H1 (cell line): ENCODE measurements at regions of chr6 and their contacts with region 1.

Region 1: GRCh38 chr6:165884813-165885765 is 222.0 kb upstream of the PDE10A start:
- DNase-seq: peak; percentile 47 to 94
- H3K4me3 ChIP-seq: no peak overlapping the region
- H3K27ac ChIP-seq: no peak overlapping the region
- H3K4me1 ChIP-seq: no peaks in the 10 kb centered on the region
- H3K27me3 ChIP-seq: peaks cover 0 to 2% (median 0%) of the 10 kb centered on the region in 4 experiments; a peak in 1 of 7 replicates
- CTCF ChIP-seq: peak; percentile 87 to 97 (median 87)
- EP300 ChIP-seq: no peak
- POLR2A ChIP-seq: no peak
- RAD21 ChIP-seq: peak; percentile 95 to 96

Region 2: GRCh38 chr6:165899611-165900010 is 14.5 kb after region 1 on chr6:
- CTCF ChIA-PET with region 1: interaction called, 14 read pairs
- POLR2A ChIA-PET with region 1: no interaction called
- DNase-seq: no peak
- H3K4me3 ChIP-seq: no peak overlapping the region
- H3K27ac ChIP-seq: no peak overlapping the region
- H3K4me1 ChIP-seq: no peaks in the 10 kb centered on the region
- H3K27me3 ChIP-seq: no peaks in the 10 kb centered on the region
- CTCF ChIP-seq: no peak
- EP300 ChIP-seq: no peak
- POLR2A ChIP-seq: no peak
- RAD21 ChIP-seq: no peak

Region 3: GRCh38 chr6:165931675-165932074 is 46.6 kb after region 1 on chr6:
- CTCF ChIA-PET with region 1: interaction called, 15 read pairs
- POLR2A ChIA-PET with region 1: no interaction called
- DNase-seq: no peak
- H3K4me3 ChIP-seq: no peak overlapping the region
- H3K27ac ChIP-seq: no peak overlapping the region
- H3K4me1 ChIP-seq: no peaks in the 10 kb centered on the region; a peak in 1 of 7 replicates
- H3K27me3 ChIP-seq: 0 out of 7 replicates have a peak, but pooled peaks cover 0 to 2% (median 0%) of the 10 kb centered on the region in 4 experiments
- CTCF ChIP-seq: peak; percentile 14 to 36 (median 35); a peak in 3 of 4 replicates
- EP300 ChIP-seq: no peak
- POLR2A ChIP-seq: no peak
- RAD21 ChIP-seq: peak; percentile 31 to 43; a peak in 3 of 4 replicates

Region 4: DNA sequence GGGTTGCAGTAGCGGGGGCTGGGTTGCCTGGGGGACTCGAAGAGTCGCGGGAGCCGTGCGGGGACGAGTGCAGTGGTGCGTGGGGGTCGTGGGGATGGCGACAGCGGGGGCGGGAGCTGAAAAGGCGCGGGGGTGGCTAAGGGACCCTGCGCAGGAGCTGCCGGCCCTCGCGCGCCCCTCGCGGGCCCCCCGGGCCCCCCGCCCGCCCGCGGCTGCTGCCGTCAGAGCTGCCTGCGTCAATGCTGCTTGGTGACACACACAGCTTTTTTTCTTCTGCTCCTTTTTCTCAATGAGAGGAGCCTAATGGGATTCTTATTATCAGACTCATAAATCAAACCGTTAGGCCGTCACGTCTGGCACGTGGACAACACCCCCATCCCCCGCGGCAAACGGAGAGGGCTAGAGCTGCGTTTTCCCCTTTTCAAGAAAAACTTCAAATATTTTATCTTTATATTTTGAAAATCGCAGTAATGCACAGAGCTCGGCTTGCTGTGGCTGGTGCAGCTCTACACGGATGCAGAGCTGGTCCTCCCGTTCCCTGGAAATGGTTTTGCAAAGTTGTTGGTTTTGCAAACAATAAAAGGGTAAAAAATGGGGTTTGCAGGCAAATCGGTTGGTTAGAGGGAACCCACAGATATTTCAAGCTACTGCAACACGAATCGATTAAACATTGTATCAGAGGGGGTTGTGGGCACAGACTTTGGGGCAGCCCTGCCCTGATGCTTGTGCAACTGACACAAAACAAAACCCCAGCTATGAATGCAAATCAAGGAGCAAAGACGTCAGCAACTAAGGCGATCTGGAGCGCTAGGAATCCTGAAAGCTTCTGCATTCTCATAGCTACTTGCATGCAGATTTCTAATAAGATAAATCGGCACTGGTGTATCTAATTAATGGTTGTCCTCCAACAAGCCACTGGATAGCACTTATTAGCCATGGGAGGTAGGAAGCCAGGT is 121.1 kb after region 1 on chr6:
- CTCF ChIA-PET with region 1: interaction called, 13 read pairs
- POLR2A ChIA-PET with region 1: no interaction called
- DNase-seq: peak in 1 of 2 experiments; percentile 43
- H3K4me3 ChIP-seq: peak overlapping the region; percentile 14 to 55 (median 27); a peak in 7 of 8 replicates
- H3K27ac ChIP-seq: no peak overlapping the region
- H3K4me1 ChIP-seq: peaks cover 3 to 16% (median 11%) of the 10 kb centered on the region in 4 experiments
- H3K27me3 ChIP-seq: peaks cover 44 to 77% (median 67%) of the 10 kb centered on the region in 4 experiments
- CTCF ChIP-seq: no peak
- EP300 ChIP-seq: no peak
- POLR2A ChIP-seq: no peak
- RAD21 ChIP-seq: no peak

Region 5: GRCh38 chr6:166078294-166078693 is 193.2 kb after region 1 on chr6:
- CTCF ChIA-PET with region 1: interaction called, 16 read pairs
- POLR2A ChIA-PET with region 1: no interaction called
- DNase-seq: no peak
- H3K4me3 ChIP-seq: no peak overlapping the region
- H3K27ac ChIP-seq: no peak overlapping the region
- H3K4me1 ChIP-seq: no peaks in the 10 kb centered on the region
- H3K27me3 ChIP-seq: no peaks in the 10 kb centered on the region
- CTCF ChIP-seq: no peak
- EP300 ChIP-seq: no peak
- POLR2A ChIP-seq: no peak
- RAD21 ChIP-seq: no peak